ENCODE measurements at regions of chr13 and their contacts with region 1.

Region 1: GRCh38 chr13:42110410-42111155 is 62.1 kb downstream of the DGKH start:
- DNase-seq: peak in 6 of 9 experiments; percentile 13 to 78 (median 44)
- ATAC-seq: peak; percentile 81
- H3K4me3 ChIP-seq: no peak overlapping the region
- H3K4me3 Mint-ChIP-seq: no peak overlapping the region
- H3K27ac ChIP-seq: no peak overlapping the region
- H3K27ac Mint-ChIP-seq: no peak overlapping the region
- H3K4me1 ChIP-seq: no peaks in the 10 kb centered on the region
- H3K4me1 Mint-ChIP-seq: peaks cover 9% of the 10 kb centered on the region
- H3K27me3 ChIP-seq: no peaks in the 10 kb centered on the region
- H3K27me3 Mint-ChIP-seq: no peaks in the 10 kb centered on the region
- CTCF ChIP-seq: peak; percentile 77

Region 2: DNA sequence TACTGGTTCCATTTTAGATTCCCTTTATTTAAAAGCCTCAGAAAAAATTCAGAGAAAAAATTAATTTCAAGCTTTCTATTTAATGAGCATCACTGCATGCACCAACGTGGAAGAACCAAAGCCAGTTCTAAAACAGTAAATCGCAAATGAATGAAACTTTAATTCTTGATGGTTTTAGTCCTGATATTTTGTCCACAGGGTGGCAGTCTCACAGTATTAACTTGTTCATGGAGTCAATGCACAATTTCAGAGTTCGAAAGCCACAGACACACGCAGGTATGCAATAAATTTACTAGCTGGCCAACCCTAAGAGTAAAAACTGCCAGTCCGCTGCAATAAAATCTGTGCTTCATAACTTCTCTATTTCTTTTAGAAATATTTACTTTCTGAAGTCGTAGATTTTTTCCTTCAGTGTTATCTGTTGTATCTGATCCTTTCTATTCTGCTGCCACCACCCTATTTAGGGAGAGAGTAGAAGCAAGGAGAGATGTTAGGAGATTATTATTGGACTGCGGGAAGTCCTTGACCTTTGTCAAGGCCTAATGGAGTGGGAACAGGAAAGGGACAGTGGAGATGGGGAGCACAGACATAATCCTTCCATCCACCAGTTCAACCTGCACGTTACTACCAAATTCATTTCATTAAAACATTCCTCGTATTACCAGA is 1056.2 kb before region 1 on chr13:
- CTCF ChIA-PET with region 1: no interaction called
- POLR2A ChIA-PET with region 1: no interaction called
- intact Hi-C with region 1: loop called in 1 of 2 experiments (anchors 10 kb)
- DNase-seq: peak in 5 of 9 experiments; percentile 30 to 79 (median 57)
- ATAC-seq: peak; percentile 78
- H3K4me3 ChIP-seq: no peak overlapping the region
- H3K4me3 Mint-ChIP-seq: no peak overlapping the region
- H3K27ac ChIP-seq: no peak overlapping the region
- H3K27ac Mint-ChIP-seq: peak overlapping the region; percentile 4
- H3K4me1 ChIP-seq: peaks cover 15% of the 10 kb centered on the region
- H3K4me1 Mint-ChIP-seq: peaks cover 51% of the 10 kb centered on the region
- H3K27me3 ChIP-seq: no peaks in the 10 kb centered on the region
- H3K27me3 Mint-ChIP-seq: no peaks in the 10 kb centered on the region
- CTCF ChIP-seq: peak; percentile 66

Region 3: GRCh38 chr13:41222259-41222852 is 888.2 kb before region 1 on chr13:
- CTCF ChIA-PET with region 1: no interaction called
- POLR2A ChIA-PET with region 1: no interaction called
- intact Hi-C with region 1: loop called in 1 of 2 experiments (anchors 10 kb)
- DNase-seq: peak; percentile 9 to 70 (median 46)
- ATAC-seq: peak; percentile 98
- H3K4me3 ChIP-seq: no peak overlapping the region
- H3K4me3 Mint-ChIP-seq: no peak overlapping the region
- H3K27ac ChIP-seq: no peak overlapping the region
- H3K27ac Mint-ChIP-seq: no peak overlapping the region
- H3K4me1 ChIP-seq: no peaks in the 10 kb centered on the region
- H3K4me1 Mint-ChIP-seq: peaks cover 3% of the 10 kb centered on the region
- H3K27me3 ChIP-seq: no peaks in the 10 kb centered on the region
- H3K27me3 Mint-ChIP-seq: no peaks in the 10 kb centered on the region
- CTCF ChIP-seq: peak; percentile 78

Region 4: GRCh38 chr13:41411522-41411921 is 699.1 kb before region 1 on chr13:
- CTCF ChIA-PET with region 1: interaction called, 3 read pairs
- POLR2A ChIA-PET with region 1: no interaction called
- intact Hi-C with region 1: loop called (anchors 1 to 10 kb)
- DNase-seq: peak in 4 of 9 experiments; percentile 17 to 66 (median 38)
- ATAC-seq: no peak
- H3K4me3 ChIP-seq: no peak overlapping the region
- H3K4me3 Mint-ChIP-seq: no peak overlapping the region
- H3K27ac ChIP-seq: no peak overlapping the region
- H3K27ac Mint-ChIP-seq: no peak overlapping the region
- H3K4me1 ChIP-seq: no peaks in the 10 kb centered on the region
- H3K4me1 Mint-ChIP-seq: peaks cover 3% of the 10 kb centered on the region
- H3K27me3 ChIP-seq: no peaks in the 10 kb centered on the region
- H3K27me3 Mint-ChIP-seq: no peaks in the 10 kb centered on the region
- CTCF ChIP-seq: no peak

Region 5: GRCh38 chr13:41905600-41906254 is 204.9 kb before region 1 on chr13:
- CTCF ChIA-PET with region 1: interaction called, 6 read pairs
- POLR2A ChIA-PET with region 1: no interaction called
- intact Hi-C with region 1: loop called (anchors 1 kb)
- DNase-seq: peak in 2 of 9 experiments; percentile 46 to 61
- ATAC-seq: peak; percentile 98
- H3K4me3 ChIP-seq: no peak overlapping the region
- H3K4me3 Mint-ChIP-seq: no peak overlapping the region
- H3K27ac ChIP-seq: no peak overlapping the region
- H3K27ac Mint-ChIP-seq: no peak overlapping the region
- H3K4me1 ChIP-seq: no peaks in the 10 kb centered on the region
- H3K4me1 Mint-ChIP-seq: peaks cover 5% of the 10 kb centered on the region
- H3K27me3 ChIP-seq: no peaks in the 10 kb centered on the region
- H3K27me3 Mint-ChIP-seq: no peaks in the 10 kb centered on the region
- CTCF ChIP-seq: peak; percentile 76

Measured in CD8-positive, alpha-beta T cell (primary cell).